ENCODE measurements at regions of chr1 and their contacts with region 1.

Region 1: DNA sequence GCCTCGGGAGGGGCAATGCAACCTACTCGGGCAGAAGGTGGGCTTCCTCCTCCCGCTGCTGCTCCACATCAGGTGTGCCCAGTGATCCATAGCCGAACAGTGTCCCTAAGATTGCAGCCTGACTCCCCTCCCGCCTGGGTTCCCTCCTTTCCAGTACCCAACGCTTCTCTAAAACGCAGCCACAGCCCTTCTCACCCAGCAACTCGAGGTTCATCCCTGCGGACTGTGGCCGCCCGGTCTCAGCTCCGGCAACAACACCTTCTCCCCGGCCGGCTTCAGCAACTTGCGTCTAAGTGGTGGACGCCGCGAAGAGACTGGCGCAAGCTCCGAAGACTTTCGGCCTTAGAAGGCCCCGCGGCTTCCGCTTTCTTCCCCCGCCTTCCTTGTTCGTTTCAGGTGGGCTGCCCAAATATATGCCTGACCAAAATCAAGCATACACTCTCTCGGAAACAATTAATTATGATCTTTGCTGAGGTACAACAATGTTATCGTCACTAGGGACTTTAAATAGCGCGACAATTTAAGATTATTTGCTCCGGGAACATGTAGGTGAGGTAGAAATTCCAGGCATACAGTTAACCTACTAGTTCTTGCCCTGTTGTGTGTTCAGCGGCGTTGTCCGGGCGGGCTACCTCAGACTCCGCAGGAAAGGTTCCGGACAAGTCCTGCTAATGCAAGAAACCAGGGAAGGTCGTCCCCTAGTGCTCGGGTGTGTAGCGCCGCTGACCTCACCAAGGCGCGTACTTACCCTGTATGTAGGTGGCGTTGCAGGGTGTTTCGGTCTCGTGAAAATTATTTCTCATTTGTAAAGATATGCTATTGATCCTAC is at the start of gene RBBP5:
- DNase-seq: peak; percentile 87 to 96 (median 94)
- H3K4me3 ChIP-seq: peak within 1 kb of the TSS; percentile 99
- H3K4me3 Mint-ChIP-seq: peak within 1 kb of the TSS; percentile 94 to 99 (median 98)
- H3K27ac ChIP-seq: peak within 1 kb of the TSS; percentile 89
- H3K27ac Mint-ChIP-seq: peak within 1 kb of the TSS; percentile 97 to 100 (median 100)
- H3K4me1 ChIP-seq: peaks cover 31% of the 10 kb centered on the region
- H3K4me1 Mint-ChIP-seq: peaks cover 42 to 58% (median 50%) of the 10 kb centered on the region in 3 donors
- H3K27me3 ChIP-seq: no peaks in the 10 kb centered on the region
- H3K27me3 Mint-ChIP-seq: no peaks in the 10 kb centered on the region
- total RNA-seq, gene RBBP5: 27.5 to 30.8 TPM

Region 2: GRCh38 chr1:205141236-205142101 is 19.6 kb after region 1 on chr1:
- CTCF ChIA-PET with region 1: interaction called, 13 read pairs
- POLR2A ChIA-PET with region 1: no interaction called
- DNase-seq: peak; percentile 46 to 76 (median 61)
- H3K4me3 ChIP-seq: peak overlapping the region; percentile 14
- H3K4me3 Mint-ChIP-seq: peak overlapping the region in 3 of 7 donors; percentile 16 to 42 (median 24)
- H3K27ac ChIP-seq: no peak overlapping the region
- H3K27ac Mint-ChIP-seq: peak overlapping the region in 2 of 8 donors; percentile 13 to 48
- H3K4me1 ChIP-seq: peaks cover 9% of the 10 kb centered on the region
- H3K4me1 Mint-ChIP-seq: peaks cover 6 to 12% (median 8%) of the 10 kb centered on the region in 3 donors
- H3K27me3 ChIP-seq: no peaks in the 10 kb centered on the region
- H3K27me3 Mint-ChIP-seq: no peaks in the 10 kb centered on the region

Region 3: DNA sequence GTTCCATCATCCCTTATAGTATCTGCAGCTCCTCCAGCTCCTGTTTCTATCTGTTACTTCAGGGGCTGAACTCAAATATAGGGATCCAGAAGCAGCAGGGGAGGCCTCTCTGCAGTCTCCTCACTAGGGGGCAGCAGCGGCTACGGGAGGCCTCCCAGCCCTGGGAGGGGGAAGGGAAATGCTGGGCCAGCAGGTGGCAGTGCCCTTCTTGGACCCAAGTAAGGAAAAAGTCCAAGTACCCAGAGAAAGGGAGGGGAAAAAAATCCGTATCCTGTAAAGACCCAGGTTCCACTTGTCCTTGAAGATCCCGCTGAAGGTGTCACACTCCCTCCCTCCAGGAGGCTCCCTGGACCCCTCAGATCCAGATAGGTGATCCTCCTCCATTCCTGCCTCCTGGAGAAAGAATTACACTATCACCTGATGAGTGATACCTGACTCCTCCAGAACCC is 213.8 kb after region 1 on chr1:
- CTCF ChIA-PET with region 1: no interaction called
- POLR2A ChIA-PET with region 1: no interaction called
- DNase-seq: peak; percentile 63 to 83 (median 64)
- H3K4me3 ChIP-seq: no peak overlapping the region
- H3K4me3 Mint-ChIP-seq: no peak overlapping the region
- H3K27ac ChIP-seq: no peak overlapping the region
- H3K27ac Mint-ChIP-seq: no peak overlapping the region
- H3K4me1 ChIP-seq: no peaks in the 10 kb centered on the region
- H3K4me1 Mint-ChIP-seq: peaks cover 0 to 2% (median 0%) of the 10 kb centered on the region in 3 donors
- H3K27me3 ChIP-seq: no peaks in the 10 kb centered on the region
- H3K27me3 Mint-ChIP-seq: peaks cover 0 to 10% of the 10 kb centered on the region in 2 donors

Measured in CD8-positive, alpha-beta memory T cell (primary cell).